ENCODE measurements at regions of chr2 and their contacts with region 1.

Region 1: GRCh38 chr2:74982577-74982976 is 24.1 kb downstream of the POLE4 start:
- DNase-seq: no peak
- ATAC-seq: no peak
- H3K4me3 ChIP-seq: no peak overlapping the region
- H3K4me3 Mint-ChIP-seq: no peak overlapping the region
- H3K27ac ChIP-seq: no peak overlapping the region
- H3K27ac Mint-ChIP-seq: no peak overlapping the region
- H3K4me1 ChIP-seq: peaks cover 0 to 2% of the 10 kb centered on the region in 2 experiments
- H3K4me1 Mint-ChIP-seq: peaks cover 6 to 15% (median 8%) of the 10 kb centered on the region in 3 donors
- H3K27me3 ChIP-seq: no peaks in the 10 kb centered on the region
- H3K27me3 Mint-ChIP-seq: no peaks in the 10 kb centered on the region

Region 2: DNA sequence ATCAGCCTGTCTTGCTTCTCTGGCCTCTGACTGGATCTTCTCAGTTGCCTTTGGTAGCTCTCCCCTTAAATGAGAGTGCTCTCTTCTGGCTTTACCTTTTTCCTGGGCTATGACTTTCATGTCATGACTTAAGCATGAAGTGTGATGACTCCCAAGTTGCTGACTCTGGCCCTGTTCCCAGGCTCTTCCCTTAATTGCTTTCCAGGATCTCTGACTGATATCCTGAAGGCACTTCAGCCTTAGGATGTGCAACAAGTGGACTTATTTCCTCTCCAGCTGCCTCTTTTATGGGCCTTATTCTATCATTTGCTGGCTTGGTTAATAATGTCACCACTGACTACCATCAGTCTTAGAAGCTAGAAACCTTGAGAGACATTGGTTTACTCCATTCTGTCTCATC is 311.1 kb before region 1 on chr2:
- CTCF ChIA-PET with region 1: no interaction called
- POLR2A ChIA-PET with region 1: no interaction called
- DNase-seq: no peak
- ATAC-seq: no peak
- H3K4me3 ChIP-seq: no peak overlapping the region
- H3K4me3 Mint-ChIP-seq: no peak overlapping the region
- H3K27ac ChIP-seq: no peak overlapping the region
- H3K27ac Mint-ChIP-seq: no peak overlapping the region
- H3K4me1 ChIP-seq: no peaks in the 10 kb centered on the region
- H3K4me1 Mint-ChIP-seq: no peaks in the 10 kb centered on the region
- H3K27me3 ChIP-seq: no peaks in the 10 kb centered on the region
- H3K27me3 Mint-ChIP-seq: no peaks in the 10 kb centered on the region

Region 3: GRCh38 chr2:75021657-75022056 is 39.1 kb after region 1 on chr2:
- CTCF ChIA-PET with region 1: no interaction called
- POLR2A ChIA-PET with region 1: no interaction called
- DNase-seq: no peak
- ATAC-seq: no peak
- H3K4me3 ChIP-seq: no peak overlapping the region
- H3K4me3 Mint-ChIP-seq: no peak overlapping the region
- H3K27ac ChIP-seq: no peak overlapping the region
- H3K27ac Mint-ChIP-seq: no peak overlapping the region
- H3K4me1 ChIP-seq: no peaks in the 10 kb centered on the region
- H3K4me1 Mint-ChIP-seq: no peaks in the 10 kb centered on the region
- H3K27me3 ChIP-seq: no peaks in the 10 kb centered on the region
- H3K27me3 Mint-ChIP-seq: no peaks in the 10 kb centered on the region

Region 4: DNA sequence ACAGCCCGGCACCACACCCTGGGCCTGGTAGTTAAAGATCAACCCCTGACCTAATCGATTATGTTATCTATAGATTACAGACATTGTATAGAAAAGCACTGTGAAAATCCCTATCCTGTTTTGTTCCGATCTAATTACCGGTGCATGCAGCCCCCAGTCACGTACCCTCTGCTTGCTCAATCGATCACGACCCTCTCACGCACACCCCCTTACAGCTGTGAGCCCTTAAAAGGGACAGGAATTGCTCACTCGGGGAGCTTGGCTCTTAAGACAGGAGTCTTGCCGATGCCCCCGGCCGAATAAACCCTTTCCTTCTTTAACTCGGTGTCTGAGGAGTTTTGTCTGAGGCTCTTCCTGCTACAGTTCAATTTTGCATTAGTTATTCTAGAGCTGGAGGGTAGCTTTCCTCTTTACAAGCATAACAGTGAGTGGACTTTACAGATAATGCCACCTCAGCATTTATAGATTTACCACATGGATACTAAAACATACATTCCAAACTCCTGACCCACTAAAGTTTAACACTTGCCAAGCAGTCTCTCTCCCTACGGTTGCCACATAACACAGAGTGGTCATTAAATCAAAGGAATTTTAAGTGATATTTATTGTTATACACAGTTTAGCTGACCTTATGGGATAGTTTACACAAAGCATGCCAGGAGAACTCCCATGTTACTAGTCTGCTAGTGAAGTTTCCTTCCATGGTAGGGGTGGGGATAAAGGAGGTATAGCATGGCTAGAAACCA is 477.2 kb after region 1 on chr2:
- CTCF ChIA-PET with region 1: interaction called in 1 of 2 experiments, 11 read pairs
- POLR2A ChIA-PET with region 1: no interaction called
- DNase-seq: no peak
- ATAC-seq: no peak
- H3K4me3 ChIP-seq: no peak overlapping the region
- H3K4me3 Mint-ChIP-seq: no peak overlapping the region
- H3K27ac ChIP-seq: no peak overlapping the region
- H3K27ac Mint-ChIP-seq: no peak overlapping the region
- H3K4me1 ChIP-seq: no peaks in the 10 kb centered on the region
- H3K4me1 Mint-ChIP-seq: no peaks in the 10 kb centered on the region
- H3K27me3 ChIP-seq: no peaks in the 10 kb centered on the region
- H3K27me3 Mint-ChIP-seq: peaks cover 21 to 26% of the 10 kb centered on the region in 2 donors

Measured in T-cell (primary cell).